Activated T-helper 2 cell treated with anti-CD3 and anti-CD28 coated beads, Interferon-gamma antibody, Interleukin-2, Interleukin-4, amounts not matched to agents 10 μg/mL and 5 μg/mL and 100 μg/mL, durations not matched to agents 14 hours and 24 hours and 36 hours (primary cell): ENCODE measurements at regions of chr13 and their contacts with region 1.

Region 1: DNA sequence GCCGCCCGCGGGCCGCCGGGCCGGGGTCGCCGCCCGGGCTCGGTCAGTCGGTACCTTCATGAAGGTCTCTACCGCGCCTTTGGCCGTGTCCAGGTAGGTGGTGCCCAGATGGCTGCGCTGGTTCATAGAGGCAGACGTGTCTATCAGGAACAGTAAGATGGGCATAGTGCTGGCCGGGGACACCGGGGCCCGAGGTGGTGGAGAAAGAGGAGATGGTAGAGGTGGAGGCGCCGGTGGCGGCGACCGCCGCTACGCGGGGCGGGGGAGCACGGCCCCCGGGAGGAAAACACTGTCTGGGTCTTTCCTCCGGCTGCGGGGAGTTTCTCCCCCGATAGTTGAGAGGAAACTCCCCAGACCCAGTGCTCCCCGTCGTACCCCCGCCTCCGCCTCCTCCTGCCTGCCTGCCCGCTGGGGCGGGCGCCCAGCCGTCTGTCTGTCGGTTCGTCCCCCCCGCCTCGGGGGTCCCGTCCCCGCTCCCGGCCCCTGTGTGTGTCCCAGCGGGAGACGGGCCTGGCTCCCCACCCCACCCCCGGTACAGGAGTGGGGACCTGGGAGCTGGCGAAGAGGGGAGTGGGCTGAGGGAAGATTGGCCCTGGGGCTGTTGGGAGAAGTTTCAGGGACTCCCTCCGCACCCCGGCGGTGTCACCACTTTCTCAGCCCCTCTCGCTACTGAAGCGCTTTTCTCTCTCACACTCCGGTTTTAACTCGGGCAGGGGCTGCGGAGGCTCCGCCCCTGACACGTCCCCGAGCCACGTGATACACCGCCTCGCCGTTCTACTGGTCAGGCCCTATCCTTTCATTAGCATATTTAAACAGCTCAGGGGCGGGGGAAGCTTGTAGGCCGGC is at the start of gene INTS6:
- DNase-seq: peak; percentile 99
- H3K4me3 Mint-ChIP-seq: peak within 1 kb of the TSS; percentile 94
- H3K27ac Mint-ChIP-seq: peak within 1 kb of the TSS; percentile 99
- H3K4me1 Mint-ChIP-seq: peaks cover 31% of the 10 kb centered on the region
- H3K27me3 Mint-ChIP-seq: no peaks in the 10 kb centered on the region
- total RNA-seq, gene INTS6: 54.9 and 55.9 TPM in 2 replicates

Region 2: GRCh38 chr13:51419001-51419636 is 33.5 kb before region 1 on chr13:
- intact Hi-C with region 1: no loop called
- DNase-seq: no peak
- H3K4me3 Mint-ChIP-seq: no peak overlapping the region
- H3K27ac Mint-ChIP-seq: no peak overlapping the region
- H3K4me1 Mint-ChIP-seq: peaks cover 57% of the 10 kb centered on the region
- H3K27me3 Mint-ChIP-seq: no peaks in the 10 kb centered on the region

Region 3: GRCh38 chr13:51502153-51502651 is 49.6 kb after region 1 on chr13:
- intact Hi-C with region 1: loop called (anchors 10 kb)
- DNase-seq: no peak
- H3K4me3 Mint-ChIP-seq: no peak overlapping the region
- H3K27ac Mint-ChIP-seq: peak overlapping the region; percentile 72
- H3K4me1 Mint-ChIP-seq: peaks cover 17% of the 10 kb centered on the region
- H3K27me3 Mint-ChIP-seq: peaks cover 4% of the 10 kb centered on the region

Region 4: GRCh38 chr13:51583875-51584730 is 131.5 kb after region 1 on chr13 and contains the start of gene WDFY2:
- intact Hi-C with region 1: loop called (anchors 1 kb)
- DNase-seq: peak; percentile 99
- H3K4me3 Mint-ChIP-seq: peak within 1 kb of the TSS; percentile 93
- H3K27ac Mint-ChIP-seq: peak within 1 kb of the TSS; percentile 94
- H3K4me1 Mint-ChIP-seq: peaks cover 30% of the 10 kb centered on the region
- H3K27me3 Mint-ChIP-seq: peaks cover under 1% of the 10 kb centered on the region
- total RNA-seq, gene WDFY2: 9.0 and 9.9 TPM in 2 replicates

Region 5: DNA sequence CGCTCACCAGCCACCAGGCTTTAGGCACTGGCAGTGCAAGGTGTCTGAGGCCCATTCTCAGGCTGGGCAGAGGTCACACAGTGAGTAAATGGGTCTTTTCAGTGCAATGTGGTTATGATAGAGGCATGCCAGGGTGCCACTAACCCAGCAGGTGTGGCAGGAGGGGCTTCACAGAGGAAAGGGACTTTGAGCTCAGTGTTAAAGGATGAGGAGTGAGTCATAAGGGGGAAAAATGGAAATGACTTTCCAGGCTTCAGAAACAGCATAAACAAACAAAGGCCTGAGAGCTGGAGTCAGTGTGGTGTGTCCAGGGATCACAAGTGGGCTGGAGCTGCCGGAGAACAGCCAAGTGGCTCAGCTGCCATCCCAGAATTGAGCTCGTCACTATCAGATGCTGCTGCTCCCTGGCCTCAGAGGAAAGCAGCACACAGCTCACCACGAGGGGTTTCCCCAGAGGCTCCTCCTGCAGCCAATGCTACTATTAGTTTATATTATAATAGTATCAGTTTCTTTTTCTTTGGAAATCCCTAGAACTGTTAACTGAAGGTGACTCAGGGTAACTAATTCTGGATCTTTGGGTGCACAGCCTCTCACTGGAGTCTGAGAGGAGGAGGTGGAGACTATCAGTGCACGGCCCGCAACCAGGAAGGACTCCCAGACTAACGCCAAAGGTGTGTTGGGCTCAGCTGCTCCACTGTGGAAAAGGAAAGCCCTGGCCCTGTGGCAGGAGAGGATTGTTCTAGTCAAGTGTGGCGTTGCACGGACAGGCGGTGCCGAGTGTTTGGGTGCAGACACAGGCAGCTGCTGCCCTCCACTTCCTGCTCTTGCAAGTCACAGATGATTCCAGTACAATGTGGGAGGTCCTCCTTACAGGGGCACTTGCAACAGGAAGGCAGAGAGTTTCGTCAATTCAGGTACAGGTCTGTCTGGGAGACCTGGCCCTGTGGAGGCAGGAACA is 311.9 kb after region 1 on chr13:
- intact Hi-C with region 1: loop called (anchors 1 kb)
- DNase-seq: peak; percentile 47
- H3K4me3 Mint-ChIP-seq: peak overlapping the region; percentile 75
- H3K27ac Mint-ChIP-seq: peak overlapping the region; percentile 95
- H3K4me1 Mint-ChIP-seq: peaks cover 30% of the 10 kb centered on the region
- H3K27me3 Mint-ChIP-seq: no peaks in the 10 kb centered on the region

Region 6: GRCh38 chr13:52011632-52012511 is 559.3 kb after region 1 on chr13 and contains the start of gene ALG11:
- intact Hi-C with region 1: loop called (anchors 5 kb)
- DNase-seq: peak; percentile 99
- H3K4me3 Mint-ChIP-seq: peak within 1 kb of the TSS; percentile 94
- H3K27ac Mint-ChIP-seq: peak within 1 kb of the TSS; percentile 86
- H3K4me1 Mint-ChIP-seq: peaks cover 9% of the 10 kb centered on the region
- H3K27me3 Mint-ChIP-seq: peaks cover 35% of the 10 kb centered on the region
- total RNA-seq, gene ALG11: 21.5 and 21.9 TPM in 2 replicates

Region 7: DNA sequence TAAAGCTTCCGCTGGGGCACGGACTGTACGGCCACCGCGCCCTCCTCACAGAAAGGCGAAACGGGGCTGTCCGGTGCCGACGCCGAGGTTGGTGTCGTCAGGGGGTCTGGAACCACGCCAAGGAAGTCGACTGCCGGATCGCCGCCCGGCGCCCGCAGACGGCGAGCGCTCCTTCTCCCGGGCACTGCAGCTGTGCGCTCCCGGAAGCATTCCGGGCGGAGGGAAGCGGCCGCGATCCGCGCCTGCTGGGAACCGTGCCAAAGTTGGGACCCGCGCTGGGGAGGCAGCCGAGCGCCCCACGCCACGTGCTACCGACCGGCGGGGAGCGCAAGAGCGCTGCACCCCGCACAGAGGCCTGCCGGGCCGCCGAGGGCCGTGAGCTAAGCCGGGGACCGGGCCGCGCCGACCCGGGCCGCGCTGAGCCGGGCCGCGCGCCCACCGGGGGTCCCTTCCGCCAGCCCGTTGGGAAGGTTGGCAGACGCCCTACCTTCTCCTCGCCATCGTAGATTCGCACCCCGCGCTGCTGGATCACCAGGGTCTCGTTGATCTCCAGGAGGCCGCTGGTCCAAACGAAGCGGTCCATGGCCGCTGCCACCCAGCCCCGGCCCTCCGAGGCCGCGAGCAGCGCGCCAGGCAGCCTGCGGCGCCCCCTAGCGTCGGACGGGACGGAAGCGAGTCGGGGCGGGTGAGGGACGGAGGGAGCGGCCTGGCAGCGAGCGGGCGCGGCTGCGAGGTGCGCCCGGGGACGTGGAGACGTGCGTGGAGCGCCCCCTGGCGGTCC is 997.6 kb after region 1 on chr13 and contains the start of gene VPS36:
- intact Hi-C with region 1: loop called (anchors 5 kb)
- DNase-seq: peak; percentile 92
- H3K4me3 Mint-ChIP-seq: peak within 1 kb of the TSS; percentile 95
- H3K27ac Mint-ChIP-seq: peak within 1 kb of the TSS; percentile 91
- H3K4me1 Mint-ChIP-seq: peaks cover 37% of the 10 kb centered on the region
- H3K27me3 Mint-ChIP-seq: no peaks in the 10 kb centered on the region
- total RNA-seq, gene VPS36: 52.3 and 53.5 TPM in 2 replicates